Activated CD4-positive, alpha-beta memory T cell treated with anti-CD3 and anti-CD28 coated beads for 36 hours (primary cell): ENCODE measurements at regions of chr15 and their contacts with region 1.

Region 1: GRCh38 chr15:65304389-65305144 is at the start of gene RNU5B-1:
- DNase-seq: peak; percentile 85
- H3K4me3 Mint-ChIP-seq: peak within 1 kb of the TSS; percentile 93
- H3K27ac Mint-ChIP-seq: peak within 1 kb of the TSS; percentile 97
- H3K4me1 Mint-ChIP-seq: peaks cover 16% of the 10 kb centered on the region
- H3K27me3 Mint-ChIP-seq: peaks cover 2% of the 10 kb centered on the region
- total RNA-seq, gene RNU5B-1: not detected

Region 2: GRCh38 chr15:65028921-65029735 is 275.4 kb before region 1 on chr15 and contains the start of gene MTFMT:
- CTCF ChIA-PET with region 1: interaction called, 5 read pairs
- POLR2A ChIA-PET with region 1: no interaction called
- intact Hi-C with region 1: loop called (anchors 2 kb)
- DNase-seq: peak; percentile 94
- H3K4me3 Mint-ChIP-seq: peak within 1 kb of the TSS; percentile 83
- H3K27ac Mint-ChIP-seq: peak within 1 kb of the TSS; percentile 38
- H3K4me1 Mint-ChIP-seq: peaks cover 21% of the 10 kb centered on the region
- H3K27me3 Mint-ChIP-seq: peaks cover 6% of the 10 kb centered on the region
- total RNA-seq, gene MTFMT: 18.2 to 18.3 TPM

Region 3: GRCh38 chr15:65245096-65245856 is 59.3 kb before region 1 on chr15:
- CTCF ChIA-PET with region 1: no interaction called
- POLR2A ChIA-PET with region 1: interaction called, 14 read pairs
- intact Hi-C with region 1: no loop called
- DNase-seq: no peak
- H3K4me3 Mint-ChIP-seq: no peak overlapping the region
- H3K27ac Mint-ChIP-seq: no peak overlapping the region
- H3K4me1 Mint-ChIP-seq: peaks cover 12% of the 10 kb centered on the region
- H3K27me3 Mint-ChIP-seq: no peaks in the 10 kb centered on the region

Region 4: GRCh38 chr15:65286704-65287519 is 17.7 kb before region 1 on chr15 and contains the start of gene PARP16:
- CTCF ChIA-PET with region 1: interaction called, 15 read pairs
- POLR2A ChIA-PET with region 1: interaction called, 68 read pairs
- intact Hi-C with region 1: no loop called
- DNase-seq: peak; percentile 95
- H3K4me3 Mint-ChIP-seq: peak within 1 kb of the TSS; percentile 83
- H3K27ac Mint-ChIP-seq: peak within 1 kb of the TSS; percentile 77
- H3K4me1 Mint-ChIP-seq: peaks cover 34% of the 10 kb centered on the region
- H3K27me3 Mint-ChIP-seq: no peaks in the 10 kb centered on the region
- total RNA-seq, gene PARP16: 12.3 TPM

Region 5: DNA sequence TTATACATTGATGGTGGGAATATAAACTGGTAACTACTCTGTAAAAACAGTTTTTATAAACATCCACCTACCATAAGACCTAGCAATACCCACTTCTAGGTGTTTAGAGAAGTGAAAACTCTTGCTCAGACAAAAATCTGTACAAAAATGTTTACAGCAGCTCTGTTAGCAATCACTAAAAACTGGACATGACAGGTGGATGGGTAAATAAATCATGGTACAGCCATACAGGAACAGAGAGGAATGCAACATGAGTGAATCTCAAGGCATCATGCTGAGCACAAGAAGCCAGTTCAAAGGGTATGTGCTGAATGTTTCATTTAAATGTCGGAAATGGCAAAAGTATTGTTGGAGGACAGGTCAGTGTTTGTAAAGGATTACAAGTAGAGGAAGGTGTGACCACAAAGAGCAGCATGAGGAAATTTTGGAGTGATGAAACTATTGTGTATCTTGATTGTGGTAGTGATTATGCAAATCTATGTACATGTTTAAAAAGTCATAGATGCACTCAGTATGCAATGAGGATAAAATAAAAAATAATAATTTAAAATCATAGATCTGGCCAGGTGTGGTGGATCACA is 11.5 kb before region 1 on chr15:
- CTCF ChIA-PET with region 1: interaction called, 6 read pairs
- POLR2A ChIA-PET with region 1: interaction called, 68 read pairs
- intact Hi-C with region 1: loop called (anchors 1 kb)
- DNase-seq: no peak
- H3K4me3 Mint-ChIP-seq: no peak overlapping the region
- H3K27ac Mint-ChIP-seq: no peak overlapping the region
- H3K4me1 Mint-ChIP-seq: peaks cover 20% of the 10 kb centered on the region
- H3K27me3 Mint-ChIP-seq: peaks cover 5% of the 10 kb centered on the region

Region 6: GRCh38 chr15:65318870-65319356 is 14.3 kb after region 1 on chr15:
- CTCF ChIA-PET with region 1: interaction called, 9 read pairs
- POLR2A ChIA-PET with region 1: interaction called, 17 read pairs
- intact Hi-C with region 1: no loop called
- DNase-seq: peak; percentile 88
- H3K4me3 Mint-ChIP-seq: no peak overlapping the region
- H3K27ac Mint-ChIP-seq: no peak overlapping the region
- H3K4me1 Mint-ChIP-seq: no peaks in the 10 kb centered on the region
- H3K27me3 Mint-ChIP-seq: peaks cover 2% of the 10 kb centered on the region

Region 7: GRCh38 chr15:65516997-65517865 is 212.7 kb after region 1 on chr15 and contains the start of gene DPP8:
- CTCF ChIA-PET with region 1: no interaction called
- POLR2A ChIA-PET with region 1: interaction called, 7 read pairs
- intact Hi-C with region 1: loop called (anchors 2 kb)
- DNase-seq: peak; percentile 97
- H3K4me3 Mint-ChIP-seq: peak within 1 kb of the TSS; percentile 99
- H3K27ac Mint-ChIP-seq: peak within 1 kb of the TSS; percentile 97
- H3K4me1 Mint-ChIP-seq: peaks cover 42% of the 10 kb centered on the region
- H3K27me3 Mint-ChIP-seq: no peaks in the 10 kb centered on the region
- total RNA-seq, gene DPP8: 24.9 to 27.1 TPM

Region 8: DNA sequence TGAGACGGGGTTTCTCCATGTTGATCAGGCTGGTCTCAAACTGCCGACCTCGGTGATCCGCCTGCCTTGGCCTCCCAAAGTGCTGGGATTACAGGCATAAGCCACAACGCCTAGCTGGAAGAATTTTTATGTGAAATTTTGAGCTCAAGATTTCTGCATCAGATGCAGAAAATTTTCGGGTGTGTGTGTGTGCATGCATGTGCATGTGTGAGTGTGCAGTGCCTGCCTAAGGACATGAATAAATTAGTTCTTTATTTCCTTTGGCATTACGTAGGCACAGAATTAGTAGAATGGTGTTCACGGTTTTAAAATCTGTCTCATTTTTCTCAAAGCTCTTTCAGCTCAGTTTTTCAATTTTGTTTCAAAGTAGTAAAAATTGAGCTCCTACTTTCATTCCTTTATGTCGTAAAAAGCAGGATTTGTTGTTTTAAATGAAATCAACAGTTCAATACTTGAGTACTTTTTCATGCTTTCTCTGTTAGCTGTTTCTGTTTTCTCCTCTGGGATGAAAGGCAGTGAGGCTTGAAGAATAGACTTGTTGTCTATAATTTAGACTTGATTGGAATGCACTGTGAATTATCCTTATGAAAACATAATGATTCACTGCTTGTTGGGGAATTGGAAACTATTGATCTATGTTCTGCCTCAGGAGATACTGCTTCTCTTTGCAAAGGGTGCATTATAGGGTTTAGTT is 541.4 kb after region 1 on chr15:
- CTCF ChIA-PET with region 1: no interaction called
- POLR2A ChIA-PET with region 1: no interaction called
- intact Hi-C with region 1: no loop called
- DNase-seq: no peak
- H3K4me3 Mint-ChIP-seq: no peak overlapping the region
- H3K27ac Mint-ChIP-seq: no peak overlapping the region
- H3K4me1 Mint-ChIP-seq: no peaks in the 10 kb centered on the region
- H3K27me3 Mint-ChIP-seq: no peaks in the 10 kb centered on the region